Tibial artery (tissue), 4 donors: ENCODE measurements at regions of chr14 and their contacts with region 1.

Region 1: DNA sequence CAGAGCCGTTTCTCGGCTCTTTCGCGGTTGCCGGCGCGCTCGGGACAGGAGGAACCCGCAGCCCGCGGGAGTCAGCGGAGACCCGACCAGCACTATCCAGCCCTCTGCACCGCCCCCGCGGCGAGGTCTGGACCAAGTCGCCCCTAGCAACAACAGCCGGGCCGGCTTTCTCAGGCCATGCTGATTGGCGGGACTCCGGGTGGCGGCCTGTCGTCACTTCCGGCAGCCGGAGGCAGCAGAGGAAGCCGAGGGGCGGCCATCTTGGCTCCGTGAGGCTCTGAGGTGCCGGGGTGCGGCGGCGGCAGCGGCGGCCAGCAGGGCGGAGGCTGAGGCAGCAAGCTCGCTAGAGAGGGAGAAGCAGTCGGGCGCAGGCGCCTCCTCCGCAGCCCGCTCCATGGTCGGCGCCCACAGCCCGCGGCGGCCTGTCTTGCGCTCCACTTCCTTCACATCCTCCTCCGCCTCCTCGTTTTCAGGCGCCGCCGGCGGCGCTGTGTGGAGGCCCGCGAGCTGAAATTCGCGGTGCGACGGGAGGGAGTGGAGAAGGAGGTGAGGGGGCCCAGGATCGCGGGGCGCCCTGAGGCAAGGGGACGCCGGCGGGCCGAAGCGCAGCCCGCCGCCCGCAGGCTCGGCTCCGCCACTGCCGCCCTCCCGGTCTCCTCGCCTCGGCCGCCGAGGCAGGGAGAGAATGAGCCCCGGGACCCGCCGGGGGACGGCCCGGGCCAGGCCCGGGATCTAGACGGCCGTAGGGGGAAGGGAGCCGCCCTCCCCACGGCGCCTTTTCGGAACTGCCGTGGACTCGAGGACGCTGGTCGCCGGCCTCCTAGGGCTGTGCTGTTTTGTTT is at the start of gene MARK3:
- DNase-seq: peak; percentile 98
- H3K4me3 ChIP-seq: peak within 1 kb of the TSS; percentile 77 to 84
- H3K27ac ChIP-seq: peak within 1 kb of the TSS; percentile 93 to 97
- H3K4me1 ChIP-seq: peaks cover 0 to 33% (median 28%) of the 10 kb centered on the region in 4 donors
- H3K27me3 ChIP-seq: no peaks in the 10 kb centered on the region
- CTCF ChIP-seq: peak; percentile 16 to 25

Region 2: DNA sequence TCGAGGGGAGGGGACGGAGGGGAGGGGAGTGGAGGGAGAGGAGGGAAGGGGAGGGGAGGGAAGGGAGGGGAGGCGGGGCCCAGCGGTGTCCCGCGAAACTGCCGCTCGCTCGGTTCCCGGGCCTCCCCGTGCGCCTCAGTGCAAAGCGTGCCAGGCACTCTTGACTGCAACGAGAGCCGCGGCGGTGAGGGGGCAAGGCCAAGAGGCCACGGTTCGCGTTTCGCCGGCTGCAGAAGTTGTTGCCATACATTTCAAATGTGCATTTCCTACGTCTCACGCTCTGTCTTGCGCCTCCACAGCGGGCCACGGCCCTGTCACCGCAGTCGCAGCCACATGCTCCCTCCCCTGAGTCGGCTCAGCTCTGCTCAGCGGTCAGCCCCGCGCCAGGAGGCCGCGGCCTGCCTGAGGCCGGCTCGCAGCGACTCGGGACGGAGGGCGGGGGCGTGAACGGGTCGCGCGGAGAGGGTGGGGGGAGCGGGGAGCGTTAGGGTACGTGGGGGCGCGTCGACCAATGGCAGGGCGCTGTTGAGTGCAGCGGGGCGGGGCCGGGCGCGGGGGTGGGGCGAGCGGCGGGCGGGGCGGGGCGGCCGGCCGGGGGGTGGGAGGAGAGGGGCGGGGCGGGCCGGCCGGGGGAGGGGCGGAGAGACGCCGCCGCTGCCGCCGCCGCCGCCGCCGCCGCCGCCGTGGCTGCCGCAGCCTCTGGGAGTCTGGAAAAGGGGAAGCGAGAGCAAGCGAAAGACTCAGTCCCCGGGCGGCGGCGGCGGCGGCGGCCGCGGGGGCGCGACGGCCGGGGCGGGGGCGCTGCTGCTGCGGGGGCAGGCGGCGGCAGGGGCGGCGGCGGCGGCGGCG is 1624.1 kb before region 1 on chr14 and contains the start of gene PPP2R5C:
- intact Hi-C with region 1: loop called (anchors 5 kb)
- DNase-seq: peak; percentile 89 to 97
- H3K4me3 ChIP-seq: peak within 1 kb of the TSS; percentile 82
- H3K27ac ChIP-seq: peak within 1 kb of the TSS; percentile 86 to 90
- H3K4me1 ChIP-seq: peaks cover 0 to 18% (median 6%) of the 10 kb centered on the region in 4 donors
- H3K27me3 ChIP-seq: no peaks in the 10 kb centered on the region
- CTCF ChIP-seq: no peak

Region 3: DNA sequence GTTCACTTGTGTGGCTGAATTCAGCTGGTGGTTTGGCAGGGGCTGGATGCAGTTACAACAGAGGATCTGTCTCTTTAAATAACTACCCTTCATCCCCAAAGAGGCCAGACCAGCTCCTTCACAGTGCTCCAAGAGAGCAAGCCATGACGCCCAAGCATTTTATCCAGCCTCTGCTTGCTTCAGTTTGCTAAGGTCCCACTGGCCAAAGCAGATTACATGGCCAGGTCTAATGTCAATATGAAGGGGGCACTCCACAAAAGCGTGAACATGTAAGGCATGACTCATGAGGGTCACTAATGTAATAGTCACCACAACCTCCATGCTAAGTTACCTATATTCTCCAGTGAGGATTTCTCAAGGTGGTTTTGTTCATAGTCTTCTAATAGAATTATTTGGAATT is 62.7 kb after region 1 on chr14:
- intact Hi-C with region 1: no loop called
- DNase-seq: no peak
- H3K4me3 ChIP-seq: no peak overlapping the region
- H3K27ac ChIP-seq: no peak overlapping the region
- H3K4me1 ChIP-seq: peaks cover 0 to 15% (median 0%) of the 10 kb centered on the region in 4 donors
- H3K27me3 ChIP-seq: no peaks in the 10 kb centered on the region
- CTCF ChIP-seq: no peak

Region 4: GRCh38 chr14:103463149-103463548 is 77.8 kb after region 1 on chr14:
- intact Hi-C with region 1: no loop called
- DNase-seq: no peak
- H3K4me3 ChIP-seq: no peak overlapping the region
- H3K27ac ChIP-seq: no peak overlapping the region
- H3K4me1 ChIP-seq: no peaks in the 10 kb centered on the region
- H3K27me3 ChIP-seq: no peaks in the 10 kb centered on the region
- CTCF ChIP-seq: no peak